GM23248 (cell line): ENCODE measurements at regions of chr7 and their contacts with region 1.

Region 1: DNA sequence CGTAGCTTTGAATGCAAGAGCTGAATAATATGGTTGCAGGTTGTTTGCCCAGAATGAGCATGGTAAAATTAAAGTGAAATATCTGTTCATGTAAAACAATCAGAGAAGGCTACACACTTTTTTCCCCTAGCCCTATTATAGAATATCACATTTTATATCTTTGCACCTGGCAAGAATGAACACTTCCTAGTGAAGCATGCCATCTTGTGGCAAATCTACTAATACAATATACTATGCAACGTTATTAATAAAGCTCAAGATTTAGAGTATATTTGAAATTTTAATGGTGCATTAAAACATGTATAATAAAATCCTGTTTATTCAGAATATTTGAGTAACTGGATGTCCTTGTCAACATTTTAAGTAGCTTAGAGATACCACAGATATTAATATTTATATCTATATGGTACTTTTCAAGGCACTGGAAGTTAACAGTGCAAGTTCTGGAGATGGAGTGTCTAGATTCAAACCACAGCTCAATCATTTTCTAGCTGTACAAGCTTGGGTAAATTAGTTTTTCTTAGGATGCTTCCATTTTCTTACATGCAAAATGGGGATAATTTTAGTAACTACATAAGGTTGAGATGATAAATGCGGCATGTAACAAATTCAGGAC is 643.1 kb upstream of the SEMA3D start:
- DNase-seq: peak; percentile 64
- H3K4me3 ChIP-seq: no peak overlapping the region
- H3K27ac ChIP-seq: no peak overlapping the region
- H3K4me1 ChIP-seq: peaks cover 28% of the 10 kb centered on the region
- H3K27me3 ChIP-seq: no peaks in the 10 kb centered on the region

Region 2: GRCh38 chr7:83936056-83936708 is 1893.7 kb before region 1 on chr7:
- in situ Hi-C with region 1: loop called (anchors 25 kb)
- DNase-seq: peak; percentile 77
- H3K4me3 ChIP-seq: no peak overlapping the region
- H3K27ac ChIP-seq: no peak overlapping the region
- H3K4me1 ChIP-seq: no peaks in the 10 kb centered on the region
- H3K27me3 ChIP-seq: no peaks in the 10 kb centered on the region

Region 3: GRCh38 chr7:84490661-84491060 is 1339.3 kb before region 1 on chr7:
- in situ Hi-C with region 1: loop called (anchors 25 kb)
- DNase-seq: peak; percentile 90
- H3K4me3 ChIP-seq: peak overlapping the region; percentile 70
- H3K27ac ChIP-seq: no peak overlapping the region
- H3K4me1 ChIP-seq: peaks cover 30% of the 10 kb centered on the region
- H3K27me3 ChIP-seq: no peaks in the 10 kb centered on the region

Region 4: GRCh38 chr7:84783141-84783778 is 1046.7 kb before region 1 on chr7:
- in situ Hi-C with region 1: no loop called
- DNase-seq: peak; percentile 30
- H3K4me3 ChIP-seq: no peak overlapping the region
- H3K27ac ChIP-seq: no peak overlapping the region
- H3K4me1 ChIP-seq: peaks cover 8% of the 10 kb centered on the region
- H3K27me3 ChIP-seq: no peaks in the 10 kb centered on the region

Region 5: GRCh38 chr7:85186521-85187241 is 643.2 kb before region 1 on chr7 and contains the start of gene SEMA3D:
- in situ Hi-C with region 1: loop called (anchors 5 kb)
- DNase-seq: peak; percentile 94
- H3K4me3 ChIP-seq: peak within 1 kb of the TSS; percentile 76
- H3K27ac ChIP-seq: peak within 1 kb of the TSS; percentile 39; the same call in 1 of the 2 replicates
- H3K4me1 ChIP-seq: 0 out of 2 replicates have a peak, but pooled peaks cover 4% of the 10 kb centered on the region
- H3K27me3 ChIP-seq: 0 out of 2 replicates have a peak, but pooled peaks cover 3% of the 10 kb centered on the region
- total RNA-seq, gene SEMA3D: 6.6 and 10.1 TPM in 2 replicates

Region 6: GRCh38 chr7:85508642-85509410 is 321.1 kb before region 1 on chr7:
- in situ Hi-C with region 1: no loop called
- DNase-seq: peak; percentile 94
- H3K4me3 ChIP-seq: peak overlapping the region; percentile 32
- H3K27ac ChIP-seq: peak overlapping the region; percentile 79
- H3K4me1 ChIP-seq: peaks cover 25% of the 10 kb centered on the region
- H3K27me3 ChIP-seq: no peaks in the 10 kb centered on the region

Region 7: GRCh38 chr7:85554236-85555178 is 275.4 kb before region 1 on chr7:
- in situ Hi-C with region 1: loop called (anchors 25 kb)
- DNase-seq: peak; percentile 80
- H3K4me3 ChIP-seq: no peak overlapping the region
- H3K27ac ChIP-seq: no peak overlapping the region
- H3K4me1 ChIP-seq: peaks cover 15% of the 10 kb centered on the region
- H3K27me3 ChIP-seq: no peaks in the 10 kb centered on the region

Region 8: DNA sequence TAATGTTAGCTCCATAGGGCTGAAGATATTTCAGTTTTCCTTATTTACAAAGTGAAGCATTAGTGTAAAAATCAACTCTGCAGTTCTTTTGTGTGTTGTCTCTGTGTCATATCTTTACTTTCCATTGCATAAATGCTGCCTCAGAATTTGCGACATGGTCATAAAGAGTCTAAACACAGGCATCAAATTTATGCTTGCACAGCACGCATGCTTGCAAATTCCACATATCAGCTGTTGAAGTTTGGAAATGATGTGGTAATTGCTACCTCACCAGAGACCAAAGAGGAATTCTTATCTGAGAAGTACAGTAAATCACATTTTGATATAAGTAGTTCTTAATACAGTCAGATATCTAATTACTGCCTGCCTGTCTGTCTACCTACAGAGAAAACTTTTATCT is 465.6 kb after region 1 on chr7:
- in situ Hi-C with region 1: no loop called
- DNase-seq: no peak
- H3K4me3 ChIP-seq: no peak overlapping the region
- H3K27ac ChIP-seq: no peak overlapping the region
- H3K4me1 ChIP-seq: no peaks in the 10 kb centered on the region
- H3K27me3 ChIP-seq: no peaks in the 10 kb centered on the region